A549 (cell line): ENCODE measurements at regions of chr2 and their contacts with region 1.

Region 1: DNA sequence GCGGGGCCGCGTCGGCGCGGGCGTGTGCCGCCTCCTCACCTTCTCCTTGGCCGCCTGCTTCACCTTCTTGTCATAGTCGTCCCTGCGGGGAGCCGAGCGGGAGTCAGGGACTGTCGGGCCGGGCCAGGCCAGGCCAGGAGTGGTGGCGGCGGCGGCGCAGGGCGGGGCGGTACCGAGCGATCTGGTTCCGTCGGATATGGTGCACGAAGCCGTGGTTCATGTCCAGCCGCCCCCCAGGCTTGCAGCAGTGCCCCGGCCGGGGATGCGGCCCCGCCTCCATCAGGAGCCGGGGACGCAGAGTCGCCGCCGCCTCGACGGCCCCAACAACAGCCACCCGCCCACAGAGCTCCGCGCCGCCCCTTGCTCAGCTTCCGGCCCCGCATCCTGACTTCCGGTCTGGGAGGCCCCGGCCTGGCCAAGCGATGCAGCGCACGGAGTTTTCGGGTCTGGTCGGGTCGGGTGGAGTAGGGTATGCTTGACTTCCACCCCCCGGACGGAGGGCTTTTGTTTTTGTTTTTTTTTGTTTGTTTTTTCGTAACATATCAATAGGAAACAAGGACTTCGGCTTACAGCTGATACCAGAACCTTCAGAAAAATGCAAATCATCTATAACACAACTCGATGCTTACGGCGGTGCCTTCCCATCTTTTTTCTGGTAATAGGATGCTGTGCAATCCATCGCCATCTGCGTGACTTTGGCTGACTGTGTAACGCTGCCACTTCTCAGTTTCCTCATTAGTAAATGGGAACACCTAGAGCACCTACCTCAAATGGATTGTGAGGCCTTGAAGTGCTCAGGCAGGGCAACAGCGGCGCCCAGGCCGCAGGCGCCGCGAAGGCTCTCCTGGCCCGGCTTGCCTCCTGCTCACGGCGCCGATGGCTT is at the start of gene C2orf68:
- DNase-seq: peak; percentile 94 to 95
- ATAC-seq: peak; percentile 90 to 91
- H3K4me3 ChIP-seq: peak within 1 kb of the TSS; percentile 61
- H3K27ac ChIP-seq: peak within 1 kb of the TSS; percentile 72 to 92
- H3K4me1 ChIP-seq: peaks cover 14% of the 10 kb centered on the region; the same call in 2 of the 3 replicates
- CTCF ChIP-seq: no peak
- EP300 ChIP-seq: peak in 1 of 2 experiments; percentile 19; a peak in 1 of 5 replicates
- POLR2A ChIP-seq: peak; percentile 79
- RAD21 ChIP-seq: no peak
- polyA plus RNA-seq, gene C2orf68: 48.3 and 57.4 TPM in 2 replicates

Region 2: DNA sequence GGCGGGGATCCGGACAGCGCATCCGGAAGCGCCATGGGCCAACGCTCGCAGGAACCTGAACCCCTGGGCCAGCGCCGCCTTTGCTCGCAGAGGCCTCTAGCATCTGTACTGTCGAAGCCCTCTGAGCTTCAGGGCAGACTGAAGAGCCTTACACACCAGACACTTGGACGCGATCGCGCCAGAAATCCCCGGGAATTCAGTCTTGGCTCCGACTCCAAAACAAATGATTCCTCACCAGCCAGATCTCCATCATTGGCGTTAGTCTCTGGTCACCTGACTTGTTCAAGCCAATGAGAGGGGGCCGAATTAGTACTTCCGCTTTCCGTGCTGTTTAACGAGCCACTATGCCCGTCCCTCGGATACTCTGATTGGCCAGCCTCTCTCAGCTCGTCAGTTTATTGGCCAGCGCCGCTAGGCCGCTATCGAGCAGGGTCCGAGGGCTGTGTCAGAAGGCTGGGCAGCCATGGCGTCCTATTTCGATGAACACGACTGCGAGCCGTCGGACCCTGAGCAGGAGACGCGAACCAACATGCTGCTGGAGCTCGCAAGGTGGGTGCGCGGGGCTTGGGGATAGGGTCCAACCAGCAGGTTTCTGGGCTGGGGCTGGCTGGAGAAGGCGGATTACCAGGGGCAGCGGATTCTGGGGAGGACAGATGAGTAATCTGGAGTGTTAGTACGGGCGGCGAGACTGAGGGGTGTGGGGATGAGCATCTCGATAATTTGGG is 16.5 kb before region 1 on chr2 and contains the start of gene RNF181:
- CTCF ChIA-PET with region 1: no interaction called
- POLR2A ChIA-PET with region 1: interaction called, 23 read pairs
- DNase-seq: peak; percentile 99 to 100
- ATAC-seq: peak; percentile 95 to 99
- H3K4me3 ChIP-seq: peak within 1 kb of the TSS; percentile 71
- H3K27ac ChIP-seq: peak within 1 kb of the TSS; percentile 82 to 91
- H3K4me1 ChIP-seq: peaks cover 15% of the 10 kb centered on the region
- CTCF ChIP-seq: no peak
- EP300 ChIP-seq: no peak
- POLR2A ChIP-seq: peak; percentile 86
- RAD21 ChIP-seq: no peak
- polyA plus RNA-seq, gene RNF181: 287 and 366 TPM in 2 replicates

Region 3: DNA sequence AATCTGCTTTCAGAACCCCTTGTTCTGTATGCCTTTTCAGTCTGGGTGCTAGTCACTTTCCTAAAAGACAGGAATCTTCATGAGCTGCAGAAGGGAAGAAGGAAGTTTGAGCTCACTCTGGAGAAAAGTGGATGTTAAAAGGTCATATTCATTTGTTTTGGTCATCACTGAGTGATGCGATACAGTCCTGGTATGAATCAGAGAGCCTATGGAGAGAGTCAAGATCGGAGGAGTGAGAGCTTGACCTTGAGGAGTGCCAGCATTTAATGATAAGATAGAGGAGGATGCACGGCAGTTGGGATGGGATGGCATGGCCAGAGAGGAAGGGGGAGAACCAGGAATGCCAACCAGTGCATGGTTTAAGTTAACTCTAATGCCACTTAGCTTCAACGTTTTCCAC is 23.7 kb after region 1 on chr2:
- CTCF ChIA-PET with region 1: interaction called, 229 read pairs
- POLR2A ChIA-PET with region 1: interaction called, 10 read pairs
- DNase-seq: no peak
- ATAC-seq: no peak
- H3K4me3 ChIP-seq: no peak overlapping the region
- H3K27ac ChIP-seq: no peak overlapping the region
- H3K4me1 ChIP-seq: peaks cover 3% of the 10 kb centered on the region; the same call in 1 of the 3 replicates
- CTCF ChIP-seq: no peak
- EP300 ChIP-seq: no peak
- POLR2A ChIP-seq: no peak
- RAD21 ChIP-seq: no peak